Head of caudate nucleus (tissue), 42 donors: ENCODE measurements at regions of chr2 and their contacts with region 1.

Region 1: GRCh38 chr2:156332534-156333273 is at the start of gene NR4A2:
- DNase-seq: peak; percentile 70 to 94 (median 85)

Region 2: DNA sequence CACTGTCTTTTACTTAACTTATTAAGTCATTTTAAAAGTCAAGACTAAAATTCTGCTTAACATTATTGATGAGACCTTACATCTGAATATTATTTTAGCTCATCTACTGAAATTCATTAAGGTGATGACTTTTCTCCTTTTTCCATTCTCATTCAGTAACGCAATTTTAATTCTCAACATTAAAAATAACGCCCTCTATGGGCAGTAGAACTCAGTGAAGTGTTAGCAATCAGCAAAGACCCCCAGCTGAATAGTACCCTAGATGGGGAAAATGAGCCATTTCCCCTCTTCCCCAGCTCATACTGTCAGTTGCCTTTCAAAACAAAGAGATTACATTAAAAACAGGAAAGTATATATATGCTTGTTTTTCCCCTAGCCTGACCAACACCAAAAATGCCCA is 203.5 kb before region 1 on chr2:
- intact Hi-C with region 1: no loop called
- DNase-seq: no peak

Region 3: DNA sequence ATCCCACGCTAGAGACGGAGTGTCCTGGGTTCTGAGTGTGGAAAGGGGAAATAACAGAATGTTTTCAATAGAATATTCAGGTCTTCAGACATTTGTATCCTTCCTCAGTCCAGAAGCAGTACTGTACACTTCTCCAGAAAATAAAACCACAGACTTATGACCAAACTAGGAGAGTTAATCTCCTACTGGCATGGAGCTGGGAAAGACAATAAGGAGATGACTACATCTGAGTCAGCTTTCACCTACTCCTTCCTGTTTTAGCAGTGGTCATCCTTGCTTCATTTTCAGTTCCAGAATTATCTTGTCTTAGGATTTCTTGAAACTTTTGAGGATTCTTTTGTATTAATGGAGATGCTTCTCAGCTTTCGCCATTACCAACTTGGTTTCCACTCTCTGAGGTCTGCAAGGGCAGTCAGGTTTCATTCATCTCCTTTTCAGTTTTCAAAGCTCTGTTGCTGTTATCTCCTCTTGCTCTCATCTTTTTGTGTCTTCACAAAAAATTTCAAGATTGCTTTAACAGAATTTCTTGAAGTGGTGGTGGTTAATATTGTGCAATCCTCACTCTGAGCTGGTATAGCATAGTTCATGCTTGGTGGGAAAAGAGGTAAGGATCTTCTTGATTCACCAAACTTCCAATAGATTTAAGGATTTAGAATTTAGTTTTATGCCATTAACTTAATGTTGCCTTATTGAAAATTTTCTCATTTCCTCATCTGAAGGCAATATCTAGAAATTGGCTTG is 23.5 kb after region 1 on chr2:
- intact Hi-C with region 1: no loop called
- DNase-seq: no peak

Region 4: DNA sequence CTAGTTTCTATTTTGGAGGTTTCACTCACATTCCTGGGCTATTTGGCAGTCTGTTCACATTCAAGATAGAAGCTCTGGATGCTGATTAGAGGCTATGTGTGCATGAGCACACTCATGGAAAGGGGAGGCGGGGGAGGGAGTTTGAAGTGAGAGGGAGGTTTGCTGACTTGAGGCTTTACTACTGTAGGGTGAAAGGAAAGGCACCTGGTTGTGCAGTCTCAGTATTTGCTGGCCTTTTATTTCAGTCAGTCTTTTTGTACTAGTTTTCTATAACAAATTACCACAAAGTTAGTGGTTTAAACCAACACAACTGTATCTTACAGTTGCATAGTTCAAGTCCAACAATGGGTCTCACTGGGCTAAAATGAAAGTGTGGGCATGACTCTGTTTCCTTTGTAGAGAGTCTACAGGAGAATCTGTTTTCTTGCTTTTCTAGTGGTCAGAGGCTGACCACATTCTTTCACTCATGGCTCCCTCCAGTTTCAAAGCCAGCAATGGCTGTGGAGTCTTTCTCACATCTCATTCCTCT is 47.5 kb after region 1 on chr2:
- intact Hi-C with region 1: no loop called
- DNase-seq: no peak

Region 5: DNA sequence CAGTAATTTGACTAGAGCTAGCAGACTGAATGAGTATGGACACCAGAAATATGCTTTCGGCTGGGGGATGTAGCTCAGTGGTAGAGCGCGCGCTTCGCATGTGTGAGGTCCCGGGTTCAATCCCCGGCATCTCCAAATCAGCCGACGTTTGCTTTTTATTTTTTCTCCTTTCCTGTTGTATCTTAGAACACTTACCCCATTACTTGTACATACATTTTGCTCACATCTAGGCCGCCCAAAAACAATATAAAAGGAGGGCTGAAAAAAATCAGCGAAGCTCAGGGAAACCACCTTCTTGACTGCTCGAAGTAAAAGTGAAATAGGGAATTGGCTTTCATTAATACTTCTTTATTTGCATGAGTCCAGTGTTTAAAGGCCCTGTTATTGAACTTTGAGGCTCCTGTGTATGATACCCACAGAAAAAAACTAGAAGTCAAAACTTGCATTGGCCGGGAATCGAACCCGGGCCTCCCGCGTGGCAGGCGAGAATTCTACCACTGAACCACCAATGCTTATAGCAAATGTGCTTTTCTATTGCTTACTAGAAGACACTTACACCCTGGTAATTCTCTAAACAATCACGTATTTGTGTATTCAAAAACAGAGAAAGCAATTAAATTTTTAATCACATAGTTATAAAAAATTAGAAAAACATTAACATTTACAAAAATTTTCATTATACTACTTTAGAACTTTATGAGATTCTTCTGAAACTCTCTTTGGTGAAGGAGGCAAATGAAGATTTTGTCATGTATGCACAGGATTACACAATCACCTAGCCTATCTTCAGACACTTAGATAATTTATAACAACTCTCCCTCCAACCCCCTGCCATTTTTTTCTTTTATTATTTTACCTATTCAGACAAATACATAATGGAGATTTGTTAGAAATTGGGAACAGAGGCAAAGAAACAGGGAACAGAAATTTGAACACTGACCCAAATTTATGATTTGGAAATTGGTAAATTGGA is 68.3 kb after region 1 on chr2:
- intact Hi-C with region 1: loop called (anchors 5 kb)
- DNase-seq: peak; percentile 56 to 94 (median 80)

Region 6: DNA sequence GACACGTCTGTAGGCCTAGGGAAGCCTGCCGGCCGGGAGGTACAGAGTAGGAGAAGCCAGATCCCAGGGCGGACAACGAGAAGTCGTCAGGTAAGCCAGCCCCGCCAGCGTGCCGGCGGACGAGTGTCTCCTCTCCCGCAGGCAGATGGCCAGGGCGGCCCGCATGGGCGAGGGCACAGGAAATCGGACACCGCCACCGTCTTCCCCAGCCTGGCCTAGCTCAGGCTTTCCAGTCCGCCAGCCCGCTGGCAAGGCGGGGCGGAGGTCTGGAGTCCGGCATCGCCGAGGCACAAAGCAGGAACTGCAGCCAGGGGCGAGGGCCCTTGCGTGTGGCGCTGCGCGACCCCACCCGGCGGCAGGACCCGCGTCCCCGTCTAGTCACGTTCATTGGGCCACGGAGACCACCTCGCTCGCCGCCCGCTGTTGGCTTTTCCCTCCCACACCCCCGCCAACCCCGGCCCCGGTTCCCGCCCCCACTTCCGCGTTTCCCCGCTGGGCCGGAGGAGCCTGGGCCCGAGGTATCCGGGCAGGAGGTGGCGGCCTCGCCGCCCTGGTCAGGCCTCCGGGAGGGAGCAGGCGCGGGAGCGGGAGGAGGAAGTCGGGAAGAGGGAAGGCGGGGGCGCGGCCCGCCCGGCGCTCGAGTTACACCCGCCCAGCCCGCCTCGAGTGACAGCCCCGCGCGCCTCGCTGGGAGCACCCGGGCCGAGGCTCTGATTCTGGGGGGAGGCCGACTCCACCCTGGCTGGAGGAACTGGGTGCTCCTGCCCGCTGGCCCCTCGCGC is 103.2 kb after region 1 on chr2 and contains the start of gene GPD2:
- intact Hi-C with region 1: loop called (anchors 5 kb)
- DNase-seq: peak; percentile 69 to 95 (median 89)

Region 7: DNA sequence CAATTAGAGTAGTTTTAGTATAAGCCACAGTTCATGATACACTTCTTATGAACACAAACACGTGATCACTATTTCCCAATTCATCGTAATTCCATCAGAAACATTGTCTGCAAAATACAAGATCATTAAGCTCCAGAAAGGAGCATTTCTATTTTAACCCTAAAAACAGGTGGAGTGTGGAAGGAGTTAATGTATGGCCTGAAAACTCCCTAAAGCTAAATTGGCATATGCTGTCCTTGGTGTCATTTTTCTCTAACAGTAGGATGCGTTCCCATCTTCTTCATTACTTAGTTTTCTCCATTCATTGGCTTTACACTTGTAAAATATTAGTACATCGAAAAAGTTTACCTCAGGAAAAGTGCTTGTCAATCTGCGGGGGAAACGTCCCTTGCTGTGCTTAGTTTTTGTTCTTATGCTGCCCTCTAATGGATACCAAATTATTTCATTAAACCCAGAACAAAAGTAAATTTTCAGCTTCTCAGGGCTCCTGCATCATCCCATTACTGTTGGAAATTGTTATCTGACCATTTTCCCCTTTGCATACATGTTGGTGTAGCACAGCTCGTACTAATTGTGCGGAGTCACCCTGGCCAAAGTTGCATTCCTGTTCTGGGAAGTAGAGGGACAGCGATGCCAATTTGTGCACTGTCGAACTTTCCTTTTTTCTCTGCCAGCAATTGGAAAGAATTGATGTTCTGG is 256.8 kb after region 1 on chr2:
- intact Hi-C with region 1: loop called (anchors 5 kb)
- DNase-seq: peak in 23 of 42 donors; percentile 5 to 67 (median 21)

Region 8: GRCh38 chr2:156719036-156719435 is 386.3 kb after region 1 on chr2:
- intact Hi-C with region 1: no loop called
- DNase-seq: no peak